MCF 10A (cell line): ENCODE measurements at regions of chr5 and their contacts with region 1.

Region 1: GRCh38 chr5:134586866-134587524 is 45.6 kb downstream of the SAR1B start:
- DNase-seq: peak; percentile 88
- H3K4me3 Mint-ChIP-seq: no peak overlapping the region
- H3K27ac Mint-ChIP-seq: no peak overlapping the region
- H3K4me1 Mint-ChIP-seq: peaks cover 18% of the 10 kb centered on the region
- H3K27me3 Mint-ChIP-seq: no peaks in the 10 kb centered on the region
- CTCF ChIP-seq: peak; percentile 89

Region 2: GRCh38 chr5:134184155-134185135 is 402.6 kb before region 1 on chr5:
- CTCF ChIA-PET with region 1: interaction called, 5 read pairs
- POLR2A ChIA-PET with region 1: no interaction called
- intact Hi-C with region 1: loop called (anchors 5 kb)
- DNase-seq: peak; percentile 87
- H3K4me3 Mint-ChIP-seq: no peak overlapping the region
- H3K27ac Mint-ChIP-seq: no peak overlapping the region
- H3K4me1 Mint-ChIP-seq: no peaks in the 10 kb centered on the region
- H3K27me3 Mint-ChIP-seq: no peaks in the 10 kb centered on the region
- CTCF ChIP-seq: peak; percentile 99

Region 3: DNA sequence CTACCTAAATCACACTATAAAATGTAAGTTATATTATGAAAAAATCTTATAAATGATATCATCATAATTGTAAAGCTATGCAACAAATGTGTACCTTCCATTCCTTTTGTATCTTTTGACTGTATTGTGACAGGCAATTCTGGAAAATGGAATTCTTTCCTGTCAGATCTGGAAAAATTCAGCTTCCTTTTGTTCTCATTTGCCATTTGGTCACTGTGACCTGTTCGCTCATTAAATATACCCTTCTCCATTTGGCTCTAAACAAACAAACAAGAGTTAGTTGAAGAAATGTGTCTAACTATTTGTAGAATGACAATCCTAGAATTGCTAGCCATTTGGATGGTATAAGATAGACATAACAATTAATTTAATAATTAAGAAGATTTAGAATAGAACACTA is 282.7 kb before region 1 on chr5:
- CTCF ChIA-PET with region 1: interaction called, 35 read pairs
- POLR2A ChIA-PET with region 1: interaction called, 6 read pairs
- intact Hi-C with region 1: loop called (anchors 1 kb)
- DNase-seq: no peak
- H3K4me3 Mint-ChIP-seq: no peak overlapping the region
- H3K27ac Mint-ChIP-seq: no peak overlapping the region
- H3K4me1 Mint-ChIP-seq: no peaks in the 10 kb centered on the region
- H3K27me3 Mint-ChIP-seq: no peaks in the 10 kb centered on the region
- CTCF ChIP-seq: no peak

Region 4: GRCh38 chr5:134503088-134503946 is 83.7 kb before region 1 on chr5:
- CTCF ChIA-PET with region 1: no interaction called
- POLR2A ChIA-PET with region 1: no interaction called
- intact Hi-C with region 1: no loop called
- DNase-seq: peak; percentile 100
- H3K4me3 Mint-ChIP-seq: peak overlapping the region; percentile 10
- H3K27ac Mint-ChIP-seq: peak overlapping the region; percentile 90
- H3K4me1 Mint-ChIP-seq: peaks cover 45% of the 10 kb centered on the region
- H3K27me3 Mint-ChIP-seq: no peaks in the 10 kb centered on the region
- CTCF ChIP-seq: no peak

Region 5: GRCh38 chr5:134561871-134562296 is 25.1 kb before region 1 on chr5:
- CTCF ChIA-PET with region 1: interaction called, 16 read pairs
- POLR2A ChIA-PET with region 1: no interaction called
- intact Hi-C with region 1: no loop called
- DNase-seq: peak; percentile 43
- H3K4me3 Mint-ChIP-seq: no peak overlapping the region
- H3K27ac Mint-ChIP-seq: no peak overlapping the region
- H3K4me1 Mint-ChIP-seq: peaks cover 3% of the 10 kb centered on the region
- H3K27me3 Mint-ChIP-seq: no peaks in the 10 kb centered on the region
- CTCF ChIP-seq: peak; percentile 10

Region 6: DNA sequence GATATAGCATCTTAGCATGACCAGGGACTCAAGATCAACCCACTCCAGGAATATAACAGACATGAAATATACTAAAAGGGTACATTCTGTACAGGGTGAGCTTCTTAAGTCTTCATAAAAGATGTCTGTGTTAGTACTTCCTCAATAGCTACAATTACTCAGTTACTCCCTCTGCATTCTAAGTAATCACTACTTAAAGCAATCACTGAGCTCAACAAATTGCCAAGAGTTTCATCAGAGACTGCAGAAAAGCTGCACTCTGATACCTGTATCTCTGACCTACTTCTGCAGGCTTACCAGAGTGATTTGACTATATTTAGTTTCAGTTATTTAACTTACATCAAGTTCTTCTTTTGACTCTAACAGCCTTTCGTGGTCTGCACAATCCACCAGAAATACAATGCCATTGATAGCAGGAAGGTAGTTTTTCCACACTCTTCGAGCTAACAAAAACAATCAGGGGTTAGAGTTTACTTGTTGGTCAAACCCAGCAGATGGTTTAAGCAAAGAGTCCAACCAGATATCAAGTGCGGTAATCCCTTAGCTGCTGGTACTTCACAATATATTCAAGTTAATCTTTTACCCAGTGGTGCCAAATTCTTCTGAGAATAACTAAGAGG is 22.3 kb after region 1 on chr5:
- CTCF ChIA-PET with region 1: interaction called, 13 read pairs
- POLR2A ChIA-PET with region 1: interaction called, 3 read pairs
- intact Hi-C with region 1: no loop called
- DNase-seq: no peak
- H3K4me3 Mint-ChIP-seq: no peak overlapping the region
- H3K27ac Mint-ChIP-seq: no peak overlapping the region
- H3K4me1 Mint-ChIP-seq: no peaks in the 10 kb centered on the region
- H3K27me3 Mint-ChIP-seq: no peaks in the 10 kb centered on the region
- CTCF ChIP-seq: no peak

Region 7: GRCh38 chr5:135230251-135230925 is 643.4 kb after region 1 on chr5:
- CTCF ChIA-PET with region 1: no interaction called
- POLR2A ChIA-PET with region 1: no interaction called
- intact Hi-C with region 1: no loop called
- DNase-seq: peak; percentile 92
- H3K4me3 Mint-ChIP-seq: no peak overlapping the region
- H3K27ac Mint-ChIP-seq: no peak overlapping the region
- H3K4me1 Mint-ChIP-seq: peaks cover 26% of the 10 kb centered on the region
- H3K27me3 Mint-ChIP-seq: no peaks in the 10 kb centered on the region
- CTCF ChIP-seq: no peak